GM12878 (cell line): ENCODE measurements at regions of chr16 and their contacts with region 1.

Region 1: GRCh38 chr16:55465077-55465896 is 13.7 kb upstream of the MMP2 start:
- DNase-seq: peak; percentile 13
- ATAC-seq: peak; percentile 98
- H3K4me3 ChIP-seq: no peak overlapping the region
- H3K27ac ChIP-seq: no peak overlapping the region
- H3K4me1 ChIP-seq: no peaks in the 10 kb centered on the region
- H3K27me3 ChIP-seq: no peaks in the 10 kb centered on the region; a peak in 1 of 4 replicates
- CTCF ChIP-seq: peak; percentile 98 to 100 (median 100); a peak in 5 of 6 replicates
- EP300 ChIP-seq: no peak
- POLR2A ChIP-seq: no peak
- RAD21 ChIP-seq: peak; percentile 100

Region 2: GRCh38 chr16:55444754-55445485 is 20.4 kb before region 1 on chr16:
- CTCF ChIA-PET with region 1: interaction called, 23 read pairs
- POLR2A ChIA-PET with region 1: no interaction called
- RAD21 ChIA-PET with region 1: interaction called, 9 read pairs
- SMC1A ChIA-PET with region 1: interaction called, 20 read pairs
- in situ Hi-C with region 1: no loop called
- intact Hi-C with region 1: no loop called
- DNase-seq: peak; percentile 16
- ATAC-seq: peak; percentile 81
- H3K4me3 ChIP-seq: no peak overlapping the region
- H3K27ac ChIP-seq: no peak overlapping the region
- H3K4me1 ChIP-seq: no peaks in the 10 kb centered on the region
- H3K27me3 ChIP-seq: no peaks in the 10 kb centered on the region
- CTCF ChIP-seq: no peak
- EP300 ChIP-seq: no peak
- POLR2A ChIP-seq: no peak
- RAD21 ChIP-seq: no peak

Region 3: DNA sequence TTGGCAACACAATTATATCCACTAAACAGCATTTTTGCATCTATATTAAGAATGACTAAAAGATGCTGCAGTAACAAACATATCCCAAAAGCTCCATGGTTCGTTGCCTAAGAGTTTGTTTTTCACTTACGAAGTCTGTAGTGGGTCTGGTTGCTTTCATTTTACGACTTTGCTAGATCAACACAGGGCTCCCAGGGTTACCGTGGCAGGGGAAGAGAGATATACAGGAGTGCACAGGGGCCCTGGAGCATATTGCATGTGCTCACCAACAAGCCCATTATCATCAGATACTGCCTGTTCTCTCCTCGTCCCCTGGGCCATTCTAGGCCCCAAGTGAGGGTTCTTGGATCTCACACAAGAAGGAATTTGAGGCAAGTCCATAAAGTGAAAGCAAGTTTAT is 10.6 kb after region 1 on chr16:
- CTCF ChIA-PET with region 1: interaction called, 19 read pairs
- POLR2A ChIA-PET with region 1: no interaction called
- RAD21 ChIA-PET with region 1: no interaction called
- SMC1A ChIA-PET with region 1: interaction called, 6 read pairs
- in situ Hi-C with region 1: no loop called
- intact Hi-C with region 1: no loop called
- DNase-seq: no peak
- ATAC-seq: no peak
- H3K4me3 ChIP-seq: no peak overlapping the region
- H3K27ac ChIP-seq: no peak overlapping the region
- H3K4me1 ChIP-seq: no peaks in the 10 kb centered on the region; the same call in 1 of the 2 replicates
- H3K27me3 ChIP-seq: no peaks in the 10 kb centered on the region; a peak in 1 of 4 replicates
- CTCF ChIP-seq: no peak
- EP300 ChIP-seq: no peak
- POLR2A ChIP-seq: no peak
- RAD21 ChIP-seq: no peak

Region 4: DNA sequence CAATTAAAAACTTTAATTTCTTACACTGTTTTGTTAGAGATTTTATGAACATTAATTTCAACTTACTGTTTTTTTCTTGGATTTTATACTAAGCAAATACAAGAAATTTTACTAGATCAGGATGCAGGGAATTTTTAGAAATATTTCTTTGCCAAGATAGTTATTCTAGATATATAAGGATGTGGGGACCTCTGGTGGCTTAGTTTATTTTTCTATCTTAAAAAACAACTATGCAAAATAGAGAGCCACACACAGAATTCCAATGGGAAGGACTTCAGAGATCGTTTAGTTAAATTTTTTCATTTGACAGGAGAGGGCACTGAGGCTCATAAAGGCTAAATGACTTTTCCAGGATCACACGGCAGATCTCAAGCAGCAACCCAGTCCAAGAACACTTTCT is 78.2 kb after region 1 on chr16:
- CTCF ChIA-PET with region 1: interaction called, 10 read pairs
- POLR2A ChIA-PET with region 1: no interaction called
- RAD21 ChIA-PET with region 1: no interaction called
- SMC1A ChIA-PET with region 1: interaction called, 4 read pairs
- in situ Hi-C with region 1: no loop called
- intact Hi-C with region 1: loop called (anchors 2 kb)
- DNase-seq: no peak
- ATAC-seq: no peak
- H3K4me3 ChIP-seq: no peak overlapping the region
- H3K27ac ChIP-seq: no peak overlapping the region
- H3K4me1 ChIP-seq: no peaks in the 10 kb centered on the region
- H3K27me3 ChIP-seq: no peaks in the 10 kb centered on the region
- CTCF ChIP-seq: no peak
- EP300 ChIP-seq: no peak
- POLR2A ChIP-seq: no peak
- RAD21 ChIP-seq: 0 out of 2 replicates have a peak, but pooled peaks have one; percentile 12

Region 5: GRCh38 chr16:55842369-55843104 is 377.2 kb after region 1 on chr16:
- CTCF ChIA-PET with region 1: interaction called, 20 read pairs
- POLR2A ChIA-PET with region 1: no interaction called
- RAD21 ChIA-PET with region 1: interaction called, 9 read pairs
- SMC1A ChIA-PET with region 1: interaction called, 10 read pairs
- in situ Hi-C with region 1: loop called (anchors 5 kb)
- intact Hi-C with region 1: loop called (anchors 1 kb)
- DNase-seq: no peak
- ATAC-seq: peak; percentile 78
- H3K4me3 ChIP-seq: no peak overlapping the region
- H3K27ac ChIP-seq: no peak overlapping the region
- H3K4me1 ChIP-seq: no peaks in the 10 kb centered on the region
- H3K27me3 ChIP-seq: no peaks in the 10 kb centered on the region
- CTCF ChIP-seq: peak; percentile 55 to 73 (median 58)
- EP300 ChIP-seq: no peak
- POLR2A ChIP-seq: no peak
- RAD21 ChIP-seq: peak; percentile 84